GM10248 (cell line): ENCODE measurements at regions of chr7 and their contacts with region 1.

Region 1: DNA sequence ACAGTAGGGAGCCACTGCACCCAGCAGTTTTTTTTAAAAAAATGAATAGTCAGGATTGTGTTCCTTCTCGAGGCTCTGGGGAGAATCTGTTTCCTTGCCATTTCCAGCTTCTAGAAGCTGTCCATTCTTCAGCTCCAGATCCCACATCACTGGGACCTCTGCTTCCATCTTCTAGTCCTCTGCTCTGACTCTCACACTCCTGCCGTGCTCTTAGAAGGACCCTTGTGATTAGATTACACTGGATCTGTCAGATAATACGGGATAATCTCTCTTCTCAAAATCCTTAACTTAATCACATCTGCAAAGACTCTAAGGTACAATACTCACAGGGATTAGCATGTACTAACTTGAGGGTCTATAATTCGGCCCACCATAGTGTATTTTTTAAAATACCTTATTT is 158.9 kb upstream of the SP4 start:
- DNase-seq: no peak
- CTCF ChIP-seq: no peak

Region 2: DNA sequence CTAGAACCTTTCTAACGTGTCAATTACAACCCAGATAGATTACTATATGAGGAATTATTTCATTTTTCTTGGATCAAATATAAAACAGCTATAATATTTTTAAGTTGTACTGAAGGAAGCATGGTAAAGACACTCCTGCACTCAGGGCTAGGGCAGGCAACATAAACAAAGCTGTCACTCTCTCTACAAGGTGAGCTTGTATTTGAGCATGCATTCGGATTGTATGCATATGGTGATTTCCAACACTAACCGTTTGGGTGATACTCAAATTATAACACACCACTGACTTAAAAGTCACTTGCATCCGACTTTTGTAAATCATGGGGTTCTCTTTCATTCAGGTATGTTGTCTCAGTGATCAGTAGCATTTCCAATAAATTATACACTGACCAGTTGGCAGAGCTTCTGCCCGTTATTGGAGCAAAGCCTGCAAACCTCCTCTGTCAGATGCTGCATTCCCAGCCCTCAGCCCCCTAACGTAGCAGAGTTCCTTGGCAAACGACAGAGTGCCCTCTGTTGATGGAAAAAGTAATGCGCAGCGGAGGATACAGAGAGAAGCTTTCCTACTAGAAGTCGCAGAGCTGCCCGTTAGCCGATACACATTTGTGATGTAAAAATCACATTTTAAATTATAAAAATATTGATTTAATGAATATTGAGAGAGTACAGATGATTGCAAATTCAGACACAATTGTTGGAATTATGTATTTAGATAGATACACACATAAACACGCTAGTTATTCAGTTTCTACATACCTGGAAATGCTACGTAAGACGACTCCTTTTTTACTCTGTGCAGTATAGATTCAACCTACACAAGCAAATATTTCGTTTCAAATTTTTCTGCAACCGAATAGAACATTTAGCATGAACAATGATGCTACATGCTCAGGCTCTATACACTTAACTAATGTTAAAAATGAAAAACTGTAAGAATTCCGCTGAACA is 15.0 kb before region 1 on chr7:
- CTCF ChIA-PET with region 1: interaction called, 14 read pairs
- POLR2A ChIA-PET with region 1: no interaction called
- DNase-seq: peak; percentile 33
- CTCF ChIP-seq: peak; percentile 58